Gastrocnemius medialis (tissue), 4 donors: ENCODE measurements at regions of chr14 and their contacts with region 1.

Region 1: GRCh38 chr14:89349171-89350008 is 67.6 kb downstream of the FOXN3 start:
- DNase-seq: peak; percentile 86 to 95
- ATAC-seq: peak; percentile 95 to 98
- H3K4me3 ChIP-seq: no peak overlapping the region
- H3K27ac ChIP-seq: peak overlapping the region; percentile 36 to 79 (median 62)
- H3K4me1 ChIP-seq: peaks cover 55 to 57% of the 10 kb centered on the region in 2 donors
- H3K27me3 ChIP-seq: no peaks in the 10 kb centered on the region
- CTCF ChIP-seq: no peak
- POLR2A ChIP-seq: no peak

Region 2: DNA sequence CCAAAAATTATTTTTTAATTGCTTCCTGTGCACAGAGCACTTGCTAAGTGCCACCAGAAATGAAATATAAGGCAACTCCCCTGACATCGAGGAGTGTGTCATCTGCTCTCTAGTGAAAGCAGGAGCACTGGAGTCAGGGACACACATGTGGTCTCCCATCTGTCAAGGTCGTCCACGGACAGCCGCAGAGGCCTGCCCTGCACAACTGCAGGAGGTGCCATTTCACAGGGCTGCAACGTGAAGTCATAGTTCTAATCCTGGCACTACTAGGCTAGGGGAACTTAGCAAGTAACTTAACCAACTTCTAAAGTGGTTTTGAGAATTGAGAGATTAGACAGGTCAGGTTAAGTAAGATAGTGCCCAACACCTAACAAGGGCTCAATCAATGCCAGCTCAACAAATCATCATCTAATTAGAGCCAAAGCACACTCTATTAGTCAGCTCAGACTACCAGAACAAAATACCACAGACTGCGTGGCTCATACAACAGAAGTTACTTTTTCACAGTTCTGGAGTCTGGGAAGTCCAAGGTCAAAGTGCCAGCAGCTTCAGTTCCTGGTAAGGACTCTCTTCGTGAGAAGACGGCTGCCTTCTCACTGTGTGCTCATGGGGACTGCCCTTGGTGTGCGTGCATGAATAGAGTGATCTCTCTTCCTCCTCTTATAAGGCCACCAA is 37.0 kb after region 1 on chr14:
- in situ Hi-C with region 1: no loop called
- intact Hi-C with region 1: loop called (anchors 5 kb)
- DNase-seq: peak; percentile 58 to 86
- ATAC-seq: peak; percentile 77 to 82
- H3K4me3 ChIP-seq: peak overlapping the region in 2 of 4 donors; percentile 1 to 3
- H3K27ac ChIP-seq: peak overlapping the region; percentile 78 to 84 (median 84)
- H3K4me1 ChIP-seq: peaks cover 60 to 71% of the 10 kb centered on the region in 2 donors
- H3K27me3 ChIP-seq: no peaks in the 10 kb centered on the region
- CTCF ChIP-seq: no peak
- POLR2A ChIP-seq: no peak